Mammary epithelial cell (primary cell): ENCODE measurements at regions of chr6 and their contacts with region 1.

Region 1: GRCh38 chr6:109705258-109705657 is 14.2 kb downstream of the FIG4 start:
- DNase-seq: peak; percentile 72
- H3K4me3 ChIP-seq: no peak overlapping the region
- H3K27ac ChIP-seq: no peak overlapping the region
- H3K4me1 ChIP-seq: no peaks in the 10 kb centered on the region
- H3K27me3 ChIP-seq: no peaks in the 10 kb centered on the region
- CTCF ChIP-seq: peak; percentile 96

Region 2: GRCh38 chr6:109595998-109596397 is 109.3 kb before region 1 on chr6:
- CTCF ChIA-PET with region 1: no interaction called
- dilution Hi-C with region 1: no loop called
- in situ Hi-C with region 1: no loop called
- intact Hi-C with region 1: loop called (anchors 1 kb)
- DNase-seq: peak; percentile 12
- H3K4me3 ChIP-seq: no peak overlapping the region
- H3K27ac ChIP-seq: no peak overlapping the region
- H3K4me1 ChIP-seq: no peaks in the 10 kb centered on the region
- H3K27me3 ChIP-seq: no peaks in the 10 kb centered on the region
- CTCF ChIP-seq: peak; percentile 30 to 74

Region 3: GRCh38 chr6:110053395-110054240 is 348.4 kb after region 1 on chr6:
- CTCF ChIA-PET with region 1: no interaction called
- dilution Hi-C with region 1: no loop called
- in situ Hi-C with region 1: loop called in 1 of 2 experiments (anchors 5 kb)
- intact Hi-C with region 1: loop called (anchors 1 kb)
- DNase-seq: peak; percentile 29
- H3K4me3 ChIP-seq: no peak overlapping the region
- H3K27ac ChIP-seq: no peak overlapping the region
- H3K4me1 ChIP-seq: no peaks in the 10 kb centered on the region
- H3K27me3 ChIP-seq: peaks cover 7% of the 10 kb centered on the region
- CTCF ChIP-seq: peak; percentile 77 to 78

Region 4: DNA sequence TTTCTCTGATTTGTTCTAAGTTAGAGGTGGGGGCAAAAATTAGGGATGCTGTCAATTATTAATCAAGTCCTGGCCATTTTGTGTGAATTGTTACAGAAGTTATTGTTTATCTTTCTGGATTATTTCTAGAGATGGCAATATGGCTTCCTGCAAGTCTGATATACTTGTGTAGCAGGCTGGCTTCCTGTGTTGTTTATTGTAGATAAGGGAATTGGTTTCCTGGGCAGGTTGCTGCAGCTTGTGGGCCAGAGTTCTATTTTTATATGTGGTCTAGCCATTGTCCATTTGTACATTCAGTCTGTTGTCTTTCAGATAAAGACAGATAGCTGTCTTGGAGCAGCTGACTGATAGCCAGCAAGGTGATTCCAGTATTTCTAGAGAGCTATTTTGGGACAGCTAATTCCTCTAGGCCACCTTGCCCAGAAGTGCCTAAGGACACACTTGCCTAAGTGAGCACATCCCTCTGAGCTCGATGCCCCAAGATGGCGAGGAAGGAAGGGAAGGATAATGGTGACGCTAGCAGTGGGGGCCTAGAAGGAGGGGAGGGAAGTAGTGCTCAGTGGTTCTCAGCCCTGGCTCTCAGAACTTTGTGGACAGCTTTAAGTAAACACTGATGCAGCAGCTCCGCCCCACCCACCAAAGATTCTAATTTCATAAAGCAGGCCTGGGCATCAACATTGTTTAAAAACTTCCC is 684.6 kb after region 1 on chr6:
- CTCF ChIA-PET with region 1: no interaction called
- dilution Hi-C with region 1: no loop called
- in situ Hi-C with region 1: loop called (anchors 10 to 25 kb)
- intact Hi-C with region 1: loop called (anchors 1 kb)
- DNase-seq: no peak
- H3K4me3 ChIP-seq: no peak overlapping the region
- H3K27ac ChIP-seq: no peak overlapping the region
- H3K4me1 ChIP-seq: no peaks in the 10 kb centered on the region
- H3K27me3 ChIP-seq: peaks cover 2% of the 10 kb centered on the region
- CTCF ChIP-seq: no peak

Region 5: GRCh38 chr6:110398778-110399177 is 693.5 kb after region 1 on chr6:
- CTCF ChIA-PET with region 1: no interaction called
- dilution Hi-C with region 1: no loop called
- in situ Hi-C with region 1: loop called in 1 of 2 experiments (anchors 25 kb)
- intact Hi-C with region 1: no loop called
- DNase-seq: peak; percentile 23
- H3K4me3 ChIP-seq: no peak overlapping the region
- H3K27ac ChIP-seq: no peak overlapping the region
- H3K4me1 ChIP-seq: peaks cover 11% of the 10 kb centered on the region
- H3K27me3 ChIP-seq: no peaks in the 10 kb centered on the region
- CTCF ChIP-seq: no peak